Activated CD4-positive, alpha-beta memory T cell treated with anti-CD3 and anti-CD28 coated beads for 36 hours (primary cell): ENCODE measurements at regions of chr1 and their contacts with region 1.

Region 1: GRCh38 chr1:32933742-32934322 is 30.8 kb downstream of the RNF19B start:
- DNase-seq: no peak
- H3K4me3 Mint-ChIP-seq: no peak overlapping the region
- H3K27ac Mint-ChIP-seq: peak overlapping the region; percentile 42
- H3K4me1 Mint-ChIP-seq: peaks cover 25% of the 10 kb centered on the region
- H3K27me3 Mint-ChIP-seq: no peaks in the 10 kb centered on the region

Region 2: GRCh38 chr1:32876341-32877210 is 57.3 kb before region 1 on chr1:
- CTCF ChIA-PET with region 1: interaction called, 11 read pairs
- POLR2A ChIA-PET with region 1: no interaction called
- intact Hi-C with region 1: no loop called
- DNase-seq: peak; percentile 79
- H3K4me3 Mint-ChIP-seq: no peak overlapping the region
- H3K27ac Mint-ChIP-seq: no peak overlapping the region
- H3K4me1 Mint-ChIP-seq: peaks cover 2% of the 10 kb centered on the region
- H3K27me3 Mint-ChIP-seq: peaks cover 37% of the 10 kb centered on the region

Region 3: GRCh38 chr1:33001282-33001681 is 67.5 kb after region 1 on chr1:
- CTCF ChIA-PET with region 1: interaction called, 18 read pairs
- POLR2A ChIA-PET with region 1: no interaction called
- intact Hi-C with region 1: loop called (anchors 1 kb)
- DNase-seq: no peak
- H3K4me3 Mint-ChIP-seq: no peak overlapping the region
- H3K27ac Mint-ChIP-seq: no peak overlapping the region
- H3K4me1 Mint-ChIP-seq: peaks cover 54% of the 10 kb centered on the region
- H3K27me3 Mint-ChIP-seq: no peaks in the 10 kb centered on the region

Region 4: DNA sequence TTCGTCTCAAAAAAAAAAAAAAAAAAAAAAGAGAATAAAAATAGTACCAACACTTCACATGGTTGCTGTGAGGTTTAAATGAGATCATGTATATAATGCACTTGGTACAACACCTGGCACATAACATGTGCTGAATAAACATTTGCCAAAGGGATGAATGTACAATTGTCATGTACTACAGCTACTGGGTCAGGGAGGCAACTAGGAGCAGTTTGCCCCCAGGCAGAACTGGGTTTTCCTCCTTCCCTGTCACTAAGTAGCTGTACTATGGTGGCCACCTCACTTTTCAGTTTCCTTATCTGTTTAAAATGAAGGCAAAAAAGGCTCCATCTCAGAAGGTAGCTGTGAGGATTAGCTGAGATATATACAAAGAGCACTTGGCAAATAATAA is 91.3 kb after region 1 on chr1:
- CTCF ChIA-PET with region 1: interaction called, 10 read pairs
- POLR2A ChIA-PET with region 1: no interaction called
- intact Hi-C with region 1: no loop called
- DNase-seq: no peak
- H3K4me3 Mint-ChIP-seq: no peak overlapping the region
- H3K27ac Mint-ChIP-seq: peak overlapping the region; percentile 83
- H3K4me1 Mint-ChIP-seq: peaks cover 63% of the 10 kb centered on the region
- H3K27me3 Mint-ChIP-seq: no peaks in the 10 kb centered on the region

Region 5: GRCh38 chr1:33086384-33086850 is 152.6 kb after region 1 on chr1:
- CTCF ChIA-PET with region 1: interaction called, 52 read pairs
- POLR2A ChIA-PET with region 1: no interaction called
- intact Hi-C with region 1: loop called (anchors 10 kb)
- DNase-seq: peak; percentile 64
- H3K4me3 Mint-ChIP-seq: no peak overlapping the region
- H3K27ac Mint-ChIP-seq: no peak overlapping the region
- H3K4me1 Mint-ChIP-seq: peaks cover 15% of the 10 kb centered on the region
- H3K27me3 Mint-ChIP-seq: no peaks in the 10 kb centered on the region